T-cell (primary cell): ENCODE measurements at regions of chr16 and their contacts with region 1.

Region 1: DNA sequence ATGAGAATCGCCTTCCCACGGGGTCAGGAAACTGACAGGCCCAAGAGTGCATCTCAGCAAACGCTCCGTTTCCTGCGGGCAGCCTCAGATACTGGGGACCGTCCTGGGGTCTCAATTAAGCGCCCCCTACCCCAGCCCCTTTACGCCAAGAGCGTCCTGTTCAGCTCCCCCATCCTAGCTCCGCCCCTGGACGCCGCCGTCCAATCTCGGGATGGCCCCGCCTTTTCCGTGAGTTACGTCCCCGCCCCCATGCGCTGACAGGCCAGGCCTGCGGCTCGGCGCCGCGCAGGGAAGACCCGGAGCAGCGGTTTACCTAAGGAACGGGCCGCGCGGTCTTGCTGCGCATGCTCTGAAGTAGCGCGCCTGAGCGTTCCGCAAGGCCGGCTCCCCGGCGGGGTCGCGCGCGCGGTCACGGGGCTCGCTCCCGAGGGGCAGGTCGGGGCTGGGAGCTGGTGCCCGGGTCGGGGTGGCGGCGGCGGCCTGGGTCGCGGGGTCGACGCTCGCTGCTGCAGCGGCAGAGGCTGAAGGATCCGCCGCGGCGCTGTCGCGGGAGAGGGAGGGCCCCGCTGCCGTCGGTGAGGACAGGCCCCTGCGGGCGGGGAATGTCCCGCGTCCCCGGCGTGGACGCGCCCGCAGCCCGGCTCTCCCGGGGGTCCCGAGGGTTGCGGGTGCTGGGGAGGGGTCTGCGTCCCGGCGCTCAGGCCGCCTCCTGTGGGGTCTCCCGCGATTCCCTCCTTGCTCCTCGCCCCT is at the start of gene FLYWCH1:
- DNase-seq: peak; percentile 95 to 99 (median 98)
- ATAC-seq: peak; percentile 95 to 98 (median 98)
- H3K4me3 ChIP-seq: peak within 1 kb of the TSS; percentile 69 to 77
- H3K4me3 Mint-ChIP-seq: peak within 1 kb of the TSS; percentile 90 to 92 (median 90)
- H3K27ac ChIP-seq: peak within 1 kb of the TSS; percentile 55
- H3K27ac Mint-ChIP-seq: peak within 1 kb of the TSS; percentile 83 to 92
- H3K4me1 ChIP-seq: peaks cover 0 to 25% of the 10 kb centered on the region in 2 experiments
- H3K4me1 Mint-ChIP-seq: peaks cover 17 to 32% (median 23%) of the 10 kb centered on the region in 3 donors
- H3K27me3 ChIP-seq: peaks cover 0 to 2% of the 10 kb centered on the region in 2 experiments
- H3K27me3 Mint-ChIP-seq: no peaks in the 10 kb centered on the region
- total RNA-seq, gene FLYWCH1: 83.0 to 144 (median 106) TPM

Region 2: GRCh38 chr16:2768403-2769089 is 143.2 kb before region 1 on chr16:
- CTCF ChIA-PET with region 1: no interaction called
- POLR2A ChIA-PET with region 1: interaction called in 1 of 2 experiments, 11 read pairs
- DNase-seq: no peak
- ATAC-seq: no peak
- H3K4me3 ChIP-seq: no peak overlapping the region
- H3K4me3 Mint-ChIP-seq: peak overlapping the region in 1 of 3 donors; percentile 51
- H3K27ac ChIP-seq: no peak overlapping the region
- H3K27ac Mint-ChIP-seq: peak overlapping the region in 1 of 2 donors; percentile 66
- H3K4me1 ChIP-seq: peaks cover 0 to 23% of the 10 kb centered on the region in 2 experiments
- H3K4me1 Mint-ChIP-seq: peaks cover 22 to 55% (median 26%) of the 10 kb centered on the region in 3 donors
- H3K27me3 ChIP-seq: no peaks in the 10 kb centered on the region
- H3K27me3 Mint-ChIP-seq: no peaks in the 10 kb centered on the region

Region 3: GRCh38 chr16:2883027-2883851 is 28.5 kb before region 1 on chr16 and contains the start of gene FLYWCH2:
- CTCF ChIA-PET with region 1: interaction called in 1 of 2 experiments, 10 read pairs
- POLR2A ChIA-PET with region 1: interaction called in 1 of 2 experiments, 3 read pairs
- DNase-seq: peak; percentile 95 to 100 (median 99)
- ATAC-seq: peak; percentile 77 to 87 (median 80)
- H3K4me3 ChIP-seq: peak within 1 kb of the TSS; percentile 66 to 69
- H3K4me3 Mint-ChIP-seq: peak within 1 kb of the TSS; percentile 87 to 93 (median 90)
- H3K27ac ChIP-seq: peak within 1 kb of the TSS; percentile 83
- H3K27ac Mint-ChIP-seq: peak within 1 kb of the TSS; percentile 96 to 97
- H3K4me1 ChIP-seq: peaks cover 5 to 18% of the 10 kb centered on the region in 2 experiments
- H3K4me1 Mint-ChIP-seq: peaks cover 0 to 20% (median 11%) of the 10 kb centered on the region in 3 donors
- H3K27me3 ChIP-seq: no peaks in the 10 kb centered on the region
- H3K27me3 Mint-ChIP-seq: no peaks in the 10 kb centered on the region
- total RNA-seq, gene FLYWCH2: 12.1 to 31.4 (median 25.6) TPM

Region 4: GRCh38 chr16:2926650-2927646 is 15.2 kb after region 1 on chr16:
- CTCF ChIA-PET with region 1: interaction called in 1 of 2 experiments, 15 read pairs
- POLR2A ChIA-PET with region 1: no interaction called
- DNase-seq: peak; percentile 68 to 95 (median 84)
- ATAC-seq: peak; percentile 99 to 100 (median 99)
- H3K4me3 ChIP-seq: no peak overlapping the region
- H3K4me3 Mint-ChIP-seq: no peak overlapping the region
- H3K27ac ChIP-seq: peak overlapping the region; percentile 44
- H3K27ac Mint-ChIP-seq: peak overlapping the region in 1 of 2 donors; percentile 4
- H3K4me1 ChIP-seq: peaks cover 2 to 10% of the 10 kb centered on the region in 2 experiments
- H3K4me1 Mint-ChIP-seq: peaks cover 13 to 24% (median 14%) of the 10 kb centered on the region in 3 donors
- H3K27me3 ChIP-seq: no peaks in the 10 kb centered on the region
- H3K27me3 Mint-ChIP-seq: no peaks in the 10 kb centered on the region

Region 5: GRCh38 chr16:3173892-3174617 is 262.3 kb after region 1 on chr16:
- CTCF ChIA-PET with region 1: no interaction called
- POLR2A ChIA-PET with region 1: no interaction called
- DNase-seq: no peak
- ATAC-seq: no peak
- H3K4me3 ChIP-seq: peak overlapping the region in 1 of 2 donors; percentile 25
- H3K4me3 Mint-ChIP-seq: peak overlapping the region; percentile 4 to 48 (median 34)
- H3K27ac ChIP-seq: no peak overlapping the region
- H3K27ac Mint-ChIP-seq: no peak overlapping the region
- H3K4me1 ChIP-seq: peaks cover 3 to 54% of the 10 kb centered on the region in 2 experiments
- H3K4me1 Mint-ChIP-seq: peaks cover 33 to 38% (median 38%) of the 10 kb centered on the region in 3 donors
- H3K27me3 ChIP-seq: peaks cover 11 to 88% of the 10 kb centered on the region in 2 experiments
- H3K27me3 Mint-ChIP-seq: peaks cover 46 to 67% of the 10 kb centered on the region in 2 donors